WTC11 (cell line): ENCODE measurements at regions of chr1 and their contacts with region 1.

Region 1: DNA sequence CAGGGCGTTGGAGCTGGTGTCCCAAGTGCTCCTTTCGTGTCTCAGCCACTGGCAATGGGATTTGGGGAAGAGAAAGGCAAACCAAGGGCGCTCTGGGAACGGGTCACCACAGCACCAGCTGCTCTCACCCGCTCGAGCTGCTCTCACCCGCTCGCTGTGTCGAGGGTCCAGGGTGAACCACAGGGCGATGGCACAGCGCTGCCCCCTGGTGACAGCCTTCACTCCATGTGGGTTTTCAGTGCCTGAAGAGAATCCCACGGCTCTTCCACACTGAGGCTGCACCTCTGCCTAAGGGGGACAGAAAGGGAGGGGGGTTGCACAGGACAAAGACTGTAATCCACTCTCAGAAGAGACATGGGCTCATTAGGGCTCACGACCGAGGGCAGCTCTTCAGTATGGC is 7.1 kb upstream of the CLDN19 start:
- DNase-seq: peak; percentile 72
- ATAC-seq: peak; percentile 88
- H3K4me3 Mint-ChIP-seq: no peak overlapping the region
- H3K27ac Mint-ChIP-seq: no peak overlapping the region
- H3K4me1 Mint-ChIP-seq: peaks cover 14% of the 10 kb centered on the region
- H3K27me3 Mint-ChIP-seq: no peaks in the 10 kb centered on the region
- CTCF ChIP-seq: no peak

Region 2: GRCh38 chr1:42576935-42577334 is 170.2 kb before region 1 on chr1:
- CTCF ChIA-PET with region 1: interaction called, 11 read pairs
- POLR2A ChIA-PET with region 1: no interaction called
- DNase-seq: no peak
- ATAC-seq: no peak
- H3K4me3 Mint-ChIP-seq: no peak overlapping the region
- H3K27ac Mint-ChIP-seq: no peak overlapping the region
- H3K4me1 Mint-ChIP-seq: no peaks in the 10 kb centered on the region
- H3K27me3 Mint-ChIP-seq: peaks cover 4% of the 10 kb centered on the region; the same call in 1 of the 2 replicates
- CTCF ChIP-seq: no peak

Region 3: DNA sequence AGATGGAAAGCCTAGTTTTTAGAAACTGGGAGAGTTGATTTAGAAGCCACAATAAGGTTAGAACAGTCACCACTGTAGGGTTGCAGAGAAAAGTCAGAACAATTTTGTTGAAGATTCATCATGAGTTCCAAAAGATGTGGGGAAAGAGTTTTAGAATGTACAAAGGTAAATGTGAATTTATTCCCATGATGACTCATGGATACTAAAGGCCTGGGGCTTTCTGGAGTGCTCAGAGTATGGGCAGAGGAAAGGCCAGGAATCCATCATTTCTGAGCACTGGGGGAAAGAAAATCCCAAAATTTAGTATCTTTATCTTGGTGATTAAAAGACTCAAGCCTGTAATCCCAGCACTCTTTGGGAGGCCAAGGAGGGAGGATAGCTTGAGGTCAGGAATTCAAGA is 47.1 kb before region 1 on chr1:
- CTCF ChIA-PET with region 1: no interaction called
- POLR2A ChIA-PET with region 1: no interaction called
- DNase-seq: no peak
- ATAC-seq: no peak
- H3K4me3 Mint-ChIP-seq: no peak overlapping the region
- H3K27ac Mint-ChIP-seq: no peak overlapping the region
- H3K4me1 Mint-ChIP-seq: no peaks in the 10 kb centered on the region
- H3K27me3 Mint-ChIP-seq: no peaks in the 10 kb centered on the region
- CTCF ChIP-seq: no peak

Region 4: GRCh38 chr1:42736150-42736850 is 10.8 kb before region 1 on chr1:
- CTCF ChIA-PET with region 1: interaction called, 14 read pairs
- POLR2A ChIA-PET with region 1: no interaction called
- DNase-seq: peak; percentile 55
- ATAC-seq: peak; percentile 16
- H3K4me3 Mint-ChIP-seq: no peak overlapping the region
- H3K27ac Mint-ChIP-seq: peak overlapping the region; percentile 15; the same call in 1 of the 2 replicates
- H3K4me1 Mint-ChIP-seq: peaks cover 32% of the 10 kb centered on the region
- H3K27me3 Mint-ChIP-seq: no peaks in the 10 kb centered on the region
- CTCF ChIP-seq: no peak

Region 5: GRCh38 chr1:42756956-42757891 is 10.1 kb after region 1 on chr1:
- CTCF ChIA-PET with region 1: interaction called, 15 read pairs
- POLR2A ChIA-PET with region 1: no interaction called
- DNase-seq: no peak
- ATAC-seq: peak; percentile 77
- H3K4me3 Mint-ChIP-seq: no peak overlapping the region
- H3K27ac Mint-ChIP-seq: no peak overlapping the region
- H3K4me1 Mint-ChIP-seq: peaks cover 2% of the 10 kb centered on the region
- H3K27me3 Mint-ChIP-seq: no peaks in the 10 kb centered on the region
- CTCF ChIP-seq: peak; percentile 43

Region 6: DNA sequence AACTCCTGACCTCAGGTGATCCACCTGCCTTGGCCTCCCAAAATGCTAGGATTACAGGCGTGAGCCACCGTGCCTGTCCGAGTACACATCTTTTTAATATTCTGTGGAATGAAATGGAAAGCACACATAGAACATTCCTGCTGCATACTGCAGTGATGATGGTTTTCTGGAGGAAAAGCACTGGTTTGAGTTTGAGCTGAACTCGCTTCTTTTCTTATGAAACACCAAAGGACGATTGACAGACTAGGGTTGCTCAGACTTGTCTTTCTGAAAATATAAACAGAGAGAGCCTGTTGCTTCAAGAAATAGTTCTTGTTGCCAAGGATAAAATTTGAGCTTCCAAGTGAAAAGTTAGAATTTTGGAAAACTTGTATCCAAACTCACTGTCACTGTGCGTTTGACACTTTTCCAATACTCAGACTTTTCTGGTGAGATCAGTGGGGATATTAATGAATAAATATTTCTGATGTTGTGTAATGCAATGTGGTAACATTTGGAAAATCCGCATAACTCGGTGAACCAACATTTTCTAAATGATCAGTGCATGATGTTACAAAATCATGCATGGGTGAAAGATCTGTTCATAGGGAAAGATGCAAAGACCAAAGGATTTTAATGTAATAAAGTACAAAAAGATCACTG is 54.8 kb after region 1 on chr1:
- CTCF ChIA-PET with region 1: no interaction called
- POLR2A ChIA-PET with region 1: no interaction called
- DNase-seq: no peak
- ATAC-seq: no peak
- H3K4me3 Mint-ChIP-seq: no peak overlapping the region
- H3K27ac Mint-ChIP-seq: no peak overlapping the region
- H3K4me1 Mint-ChIP-seq: no peaks in the 10 kb centered on the region
- H3K27me3 Mint-ChIP-seq: no peaks in the 10 kb centered on the region
- CTCF ChIP-seq: no peak

Region 7: GRCh38 chr1:42852613-42852990 is 105.5 kb after region 1 on chr1:
- CTCF ChIA-PET with region 1: no interaction called
- POLR2A ChIA-PET with region 1: no interaction called
- DNase-seq: no peak
- ATAC-seq: no peak
- H3K4me3 Mint-ChIP-seq: no peak overlapping the region
- H3K27ac Mint-ChIP-seq: no peak overlapping the region
- H3K4me1 Mint-ChIP-seq: peaks cover 11% of the 10 kb centered on the region
- H3K27me3 Mint-ChIP-seq: peaks cover 4% of the 10 kb centered on the region
- CTCF ChIP-seq: no peak

Region 8: GRCh38 chr1:42904434-42904833 is 157.3 kb after region 1 on chr1:
- CTCF ChIA-PET with region 1: no interaction called
- POLR2A ChIA-PET with region 1: no interaction called
- DNase-seq: no peak
- ATAC-seq: peak; percentile 88
- H3K4me3 Mint-ChIP-seq: no peak overlapping the region
- H3K27ac Mint-ChIP-seq: no peak overlapping the region
- H3K4me1 Mint-ChIP-seq: peaks cover 4% of the 10 kb centered on the region
- H3K27me3 Mint-ChIP-seq: peaks cover 11% of the 10 kb centered on the region
- CTCF ChIP-seq: no peak